Mammary epithelial cell (primary cell): ENCODE measurements at regions of chr22 and their contacts with region 1.

Region 1: GRCh38 chr22:17694193-17694592 is 55.6 kb downstream of the BCL2L13 start:
- DNase-seq: no peak
- H3K4me3 ChIP-seq: no peak overlapping the region
- H3K27ac ChIP-seq: no peak overlapping the region
- H3K4me1 ChIP-seq: no peaks in the 10 kb centered on the region
- H3K27me3 ChIP-seq: no peaks in the 10 kb centered on the region
- CTCF ChIP-seq: no peak

Region 2: DNA sequence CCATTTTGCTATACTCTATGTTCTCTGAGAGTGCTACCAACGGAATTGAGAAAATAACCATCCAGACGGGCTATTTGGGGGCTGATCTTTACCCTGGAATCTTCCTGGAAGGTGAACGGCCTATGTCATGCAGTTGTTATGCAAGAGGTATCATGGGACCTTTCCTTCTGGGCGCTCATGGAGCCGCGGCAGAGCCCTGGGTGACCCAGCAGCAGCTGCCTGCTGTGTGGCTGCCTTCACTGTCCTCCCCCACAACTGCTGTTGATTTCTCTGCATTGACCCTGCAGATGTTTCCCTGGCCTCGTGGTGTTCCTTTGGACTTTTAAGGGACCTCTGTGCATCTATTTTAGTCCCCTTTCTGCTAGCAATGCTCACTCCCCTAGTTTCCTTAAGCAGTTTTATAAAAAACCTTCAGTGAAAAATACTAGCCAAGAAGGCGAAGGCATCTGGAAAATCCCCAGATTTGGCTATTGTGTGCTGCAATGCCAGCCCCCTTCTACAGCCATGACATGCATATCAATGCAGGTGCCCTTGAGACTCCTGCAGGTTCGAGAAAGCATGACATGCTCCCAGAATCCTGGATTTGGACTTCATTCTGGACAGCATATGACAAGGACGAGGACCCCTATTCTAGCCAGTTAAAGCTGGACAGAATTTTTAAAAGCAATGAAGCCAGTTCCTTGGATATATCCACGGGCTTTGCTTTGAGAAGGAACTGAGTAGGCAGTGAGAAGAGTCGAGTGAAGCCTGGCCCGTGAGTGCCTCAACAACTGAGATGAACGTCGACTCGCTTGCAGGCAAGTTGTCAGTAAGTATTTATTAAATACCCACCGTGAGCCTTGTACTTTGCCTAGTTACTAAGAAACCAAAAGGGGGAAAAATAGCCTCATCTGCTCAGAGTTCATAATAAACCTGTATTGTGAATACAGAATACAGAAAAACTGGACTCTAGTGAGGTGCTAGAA is 131.0 kb before region 1 on chr22 and contains the start of gene SLC25A18:
- CTCF ChIA-PET with region 1: no interaction called
- dilution Hi-C with region 1: no loop called
- in situ Hi-C with region 1: no loop called
- intact Hi-C with region 1: no loop called
- DNase-seq: no peak
- H3K4me3 ChIP-seq: no peak within 1 kb of the TSS
- H3K27ac ChIP-seq: no peak within 1 kb of the TSS
- H3K4me1 ChIP-seq: no peaks in the 10 kb centered on the region
- H3K27me3 ChIP-seq: peaks cover 2% of the 10 kb centered on the region
- CTCF ChIP-seq: no peak
- total RNA-seq, gene SLC25A18: 0.33 TPM in 1 of 2 donors, not detected in the other

Region 3: DNA sequence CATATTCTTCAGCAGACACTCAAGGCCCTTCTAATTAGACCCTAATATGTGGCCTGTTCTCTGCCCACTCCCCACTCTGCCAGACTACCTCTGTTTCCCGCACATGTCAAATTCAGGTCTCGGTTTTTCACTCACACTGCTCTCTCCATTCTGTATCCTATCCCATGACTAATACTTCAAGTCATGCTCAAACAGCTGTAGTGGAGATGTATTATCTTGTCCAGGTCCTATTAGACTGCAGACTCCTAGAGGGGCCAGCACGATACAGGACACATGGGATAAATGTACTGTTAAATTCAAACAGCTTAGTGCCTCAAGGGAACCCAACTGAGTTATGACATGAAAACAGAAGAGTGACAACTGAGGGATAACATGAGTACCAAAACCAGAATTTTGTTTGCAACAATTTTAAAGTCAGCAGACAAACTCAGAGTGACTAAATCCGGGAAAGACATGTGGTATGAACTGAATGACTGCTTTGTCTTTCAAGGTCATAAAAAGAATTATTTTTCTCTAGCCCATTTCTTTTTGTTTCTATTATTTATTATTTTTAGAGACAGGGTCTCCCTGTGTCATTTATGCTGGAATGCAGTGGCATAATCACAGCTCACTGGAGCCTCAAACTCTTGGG is 86.2 kb before region 1 on chr22:
- CTCF ChIA-PET with region 1: no interaction called
- dilution Hi-C with region 1: no loop called
- in situ Hi-C with region 1: no loop called
- intact Hi-C with region 1: no loop called
- DNase-seq: no peak
- H3K4me3 ChIP-seq: no peak overlapping the region
- H3K27ac ChIP-seq: no peak overlapping the region
- H3K4me1 ChIP-seq: no peaks in the 10 kb centered on the region
- H3K27me3 ChIP-seq: no peaks in the 10 kb centered on the region
- CTCF ChIP-seq: no peak

Region 4: GRCh38 chr22:17647991-17648390 is 46.2 kb before region 1 on chr22:
- CTCF ChIA-PET with region 1: no interaction called
- dilution Hi-C with region 1: loop called (anchors 5 kb)
- in situ Hi-C with region 1: no loop called
- intact Hi-C with region 1: no loop called
- DNase-seq: no peak
- H3K4me3 ChIP-seq: no peak overlapping the region
- H3K27ac ChIP-seq: no peak overlapping the region
- H3K4me1 ChIP-seq: no peaks in the 10 kb centered on the region
- H3K27me3 ChIP-seq: no peaks in the 10 kb centered on the region
- CTCF ChIP-seq: no peak